ENCODE measurements at regions of chr16 and their contacts with region 1.

Region 1: DNA sequence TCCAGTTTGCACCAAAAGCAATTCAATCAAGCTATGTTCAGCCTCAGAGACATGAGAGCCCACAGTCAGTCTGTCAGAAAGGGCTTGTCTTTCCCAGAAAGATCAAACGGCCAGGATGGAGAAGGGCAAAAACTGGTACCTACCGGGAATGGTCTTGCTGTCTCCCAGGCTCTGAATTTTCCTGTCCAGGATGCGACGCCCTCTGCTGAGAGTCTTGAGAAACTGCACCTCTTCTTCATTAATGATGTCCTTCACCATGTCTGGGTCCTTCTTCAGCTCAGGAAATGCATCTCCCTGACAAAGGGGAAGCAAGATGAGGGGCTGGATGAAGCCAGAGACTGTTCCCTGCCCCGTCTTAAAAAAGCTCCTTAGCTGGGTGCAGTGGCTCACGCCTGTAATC is 15.8 kb upstream of the EXOSC6 start:
- DNase-seq: peak; percentile 37
- H3K4me3 Mint-ChIP-seq: no peak overlapping the region
- H3K27ac Mint-ChIP-seq: no peak overlapping the region
- H3K4me1 Mint-ChIP-seq: no peaks in the 10 kb centered on the region
- H3K27me3 Mint-ChIP-seq: no peaks in the 10 kb centered on the region

Region 2: GRCh38 chr16:70553645-70554044 is 286.1 kb after region 1 on chr16:
- CTCF ChIA-PET with region 1: no interaction called
- intact Hi-C with region 1: loop called (anchors 5 kb)
- DNase-seq: no peak
- H3K4me3 Mint-ChIP-seq: no peak overlapping the region
- H3K27ac Mint-ChIP-seq: peak overlapping the region; percentile 21
- H3K4me1 Mint-ChIP-seq: peaks cover 16% of the 10 kb centered on the region
- H3K27me3 Mint-ChIP-seq: no peaks in the 10 kb centered on the region